ENCODE measurements at regions of chr20 and their contacts with region 1.

Region 1: DNA sequence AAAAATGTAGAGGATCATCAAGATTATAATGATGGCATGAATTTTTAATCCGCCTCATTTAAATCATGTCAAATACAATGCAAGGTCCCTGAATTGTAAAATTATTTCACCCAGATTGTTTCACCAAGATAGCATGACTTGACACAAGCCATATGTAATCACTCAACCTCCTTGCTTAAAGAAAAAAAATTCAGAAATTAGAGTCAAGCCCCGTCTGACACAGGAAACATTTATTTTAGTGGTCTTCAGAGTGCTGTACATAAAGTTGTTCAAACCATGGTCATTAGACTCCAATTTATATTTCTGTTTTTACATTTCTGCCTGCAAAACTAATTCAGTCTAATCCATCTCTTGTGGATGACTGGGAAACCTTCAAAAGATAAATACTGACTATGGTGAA is 200.2 kb downstream of the CBLN4 start:
- DNase-seq: no peak
- ATAC-seq: no peak
- H3K4me3 ChIP-seq: no peak overlapping the region
- H3K27ac ChIP-seq: no peak overlapping the region
- H3K4me1 ChIP-seq: no peaks in the 10 kb centered on the region
- H3K27me3 ChIP-seq: no peaks in the 10 kb centered on the region
- CTCF ChIP-seq: no peak
- EP300 ChIP-seq: no peak
- POLR2A ChIP-seq: no peak
- RAD21 ChIP-seq: no peak

Region 2: GRCh38 chr20:55755411-55755810 is 49.7 kb before region 1 on chr20:
- CTCF ChIA-PET with region 1: no interaction called
- POLR2A ChIA-PET with region 1: no interaction called
- in situ Hi-C with region 1: loop called (anchors 10 kb)
- intact Hi-C with region 1: no loop called
- DNase-seq: no peak
- ATAC-seq: no peak
- H3K4me3 ChIP-seq: no peak overlapping the region
- H3K27ac ChIP-seq: no peak overlapping the region
- H3K4me1 ChIP-seq: no peaks in the 10 kb centered on the region
- H3K27me3 ChIP-seq: no peaks in the 10 kb centered on the region
- CTCF ChIP-seq: no peak
- EP300 ChIP-seq: no peak
- POLR2A ChIP-seq: no peak
- RAD21 ChIP-seq: no peak

Region 3: DNA sequence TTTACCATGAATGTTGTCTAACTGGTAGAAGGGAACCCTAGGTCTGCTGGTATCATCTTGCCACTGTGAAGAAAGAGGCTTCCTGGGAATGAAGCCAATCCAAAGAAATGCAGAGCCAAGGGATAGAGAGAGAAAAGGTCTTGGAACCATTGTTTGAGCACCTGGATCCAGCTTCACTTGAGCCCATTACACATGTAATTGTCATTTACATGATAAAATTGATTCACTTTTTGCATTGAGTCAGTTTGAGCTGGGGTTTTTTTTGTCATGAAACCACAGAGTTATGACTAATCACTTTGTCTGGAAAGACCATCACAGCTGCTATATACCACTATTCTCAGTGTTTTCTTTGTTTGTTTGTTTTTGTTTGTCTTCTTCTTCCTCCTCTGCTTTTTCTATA is 87.9 kb after region 1 on chr20:
- CTCF ChIA-PET with region 1: no interaction called
- POLR2A ChIA-PET with region 1: no interaction called
- in situ Hi-C with region 1: no loop called
- intact Hi-C with region 1: no loop called
- DNase-seq: no peak
- ATAC-seq: no peak
- H3K4me3 ChIP-seq: no peak overlapping the region
- H3K27ac ChIP-seq: no peak overlapping the region
- H3K4me1 ChIP-seq: no peaks in the 10 kb centered on the region
- H3K27me3 ChIP-seq: no peaks in the 10 kb centered on the region
- CTCF ChIP-seq: no peak
- EP300 ChIP-seq: no peak
- POLR2A ChIP-seq: no peak
- RAD21 ChIP-seq: no peak